GM12878 (cell line): ENCODE measurements at regions of chr11 and their contacts with region 1.

Region 1: DNA sequence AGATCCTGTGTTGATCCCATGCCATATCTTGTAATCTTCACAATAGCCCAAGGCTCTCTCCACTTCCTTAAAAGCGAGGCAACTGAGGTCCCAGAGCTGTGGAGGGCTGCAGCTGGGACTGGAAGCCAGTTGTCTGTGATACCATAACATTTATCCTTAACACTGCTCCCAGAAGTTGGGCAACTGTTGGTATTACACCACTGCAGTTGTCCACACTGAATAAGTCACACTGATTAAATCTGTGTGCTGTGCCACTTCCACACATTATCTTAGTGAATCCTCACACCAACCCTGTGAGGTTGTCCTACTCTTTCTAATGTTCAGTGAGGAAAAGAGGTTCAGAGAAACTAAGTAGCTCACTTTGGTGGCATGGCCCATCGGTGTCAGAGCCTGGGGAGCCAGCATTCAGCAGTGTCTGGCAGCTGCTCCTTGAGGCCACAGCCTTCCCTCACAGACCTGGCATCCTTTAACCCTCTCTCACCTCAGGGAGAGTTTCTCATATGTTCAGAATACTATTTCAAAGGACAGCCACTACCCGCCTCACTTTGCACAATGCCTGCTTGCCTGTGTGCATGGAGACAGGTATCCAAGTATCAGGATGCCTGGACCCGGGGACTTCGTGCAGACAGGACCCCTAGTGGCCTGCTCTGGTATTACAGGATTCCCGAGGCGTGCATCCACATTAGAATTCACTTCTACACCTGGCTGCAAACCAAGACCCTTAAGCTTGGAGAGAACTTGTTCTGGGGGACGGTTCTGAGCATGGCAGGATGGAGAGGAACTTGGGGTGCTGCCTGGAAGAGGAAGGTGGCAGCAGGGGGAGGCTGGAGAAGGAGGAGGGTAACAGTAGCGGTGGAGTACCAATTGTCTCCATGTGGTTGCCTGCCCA is 221.9 kb upstream of the TBCEL start:
- DNase-seq: no peak
- ATAC-seq: peak; percentile 80
- H3K4me3 ChIP-seq: no peak overlapping the region
- H3K27ac ChIP-seq: no peak overlapping the region
- H3K4me1 ChIP-seq: no peaks in the 10 kb centered on the region
- H3K27me3 ChIP-seq: no peaks in the 10 kb centered on the region
- CTCF ChIP-seq: peak; percentile 87 to 96 (median 91)
- EP300 ChIP-seq: no peak
- POLR2A ChIP-seq: no peak
- RAD21 ChIP-seq: peak; percentile 72

Region 2: GRCh38 chr11:120622189-120622875 is 179.7 kb before region 1 on chr11:
- CTCF ChIA-PET with region 1: interaction called, 15 read pairs
- POLR2A ChIA-PET with region 1: no interaction called
- RAD21 ChIA-PET with region 1: interaction called, 3 read pairs
- SMC1A ChIA-PET with region 1: interaction called, 4 read pairs
- in situ Hi-C with region 1: no loop called
- intact Hi-C with region 1: no loop called
- DNase-seq: no peak
- ATAC-seq: peak; percentile 89
- H3K4me3 ChIP-seq: no peak overlapping the region
- H3K27ac ChIP-seq: no peak overlapping the region; the same call in 1 of the 2 replicates
- H3K4me1 ChIP-seq: peaks cover 6% of the 10 kb centered on the region; the same call in 1 of the 2 replicates
- H3K27me3 ChIP-seq: no peaks in the 10 kb centered on the region
- CTCF ChIP-seq: peak; percentile 35 to 56 (median 54)
- EP300 ChIP-seq: no peak
- POLR2A ChIP-seq: no peak
- RAD21 ChIP-seq: peak; percentile 36

Region 3: DNA sequence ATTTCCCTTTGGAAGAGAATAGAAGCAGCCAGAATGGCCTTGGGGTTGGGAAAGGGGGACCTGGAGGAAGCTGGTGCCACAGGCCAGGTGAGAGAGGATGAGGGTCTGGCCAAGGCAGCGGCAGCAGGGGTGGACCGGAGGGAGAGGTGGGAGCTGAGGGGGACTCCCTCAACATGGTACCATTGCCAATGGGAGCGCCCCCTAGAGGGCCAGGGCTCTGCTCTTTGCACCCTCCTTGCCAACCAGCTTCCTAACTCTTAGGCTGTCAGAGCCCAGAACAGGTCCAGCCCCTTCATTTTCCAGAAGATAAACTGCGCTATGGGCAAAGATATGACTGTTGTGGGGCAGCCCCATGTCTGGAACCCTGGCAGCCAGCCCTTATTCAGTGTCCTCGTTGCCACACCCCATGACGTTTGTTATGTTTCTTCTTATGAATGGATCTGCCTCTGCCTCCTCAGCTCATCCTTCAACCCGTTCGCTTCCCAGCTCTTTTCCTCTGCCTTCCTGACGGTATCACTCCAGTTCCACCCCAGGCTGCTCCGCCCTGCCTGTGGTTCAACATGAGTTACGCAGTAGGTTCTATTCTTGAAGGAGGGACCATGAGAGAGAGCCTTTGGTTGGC is 105.3 kb before region 1 on chr11:
- CTCF ChIA-PET with region 1: interaction called, 25 read pairs
- POLR2A ChIA-PET with region 1: no interaction called
- RAD21 ChIA-PET with region 1: interaction called, 3 read pairs
- SMC1A ChIA-PET with region 1: no interaction called
- in situ Hi-C with region 1: no loop called
- intact Hi-C with region 1: no loop called
- DNase-seq: no peak
- ATAC-seq: peak; percentile 32; the same call in 1 of the 3 replicates
- H3K4me3 ChIP-seq: no peak overlapping the region
- H3K27ac ChIP-seq: no peak overlapping the region
- H3K4me1 ChIP-seq: peaks cover 1% of the 10 kb centered on the region; the same call in 1 of the 2 replicates
- H3K27me3 ChIP-seq: no peaks in the 10 kb centered on the region
- CTCF ChIP-seq: peak in 2 of 3 experiments; percentile 18 to 40; a peak in 3 of 6 replicates
- EP300 ChIP-seq: no peak
- POLR2A ChIP-seq: no peak
- RAD21 ChIP-seq: no peak

Region 4: DNA sequence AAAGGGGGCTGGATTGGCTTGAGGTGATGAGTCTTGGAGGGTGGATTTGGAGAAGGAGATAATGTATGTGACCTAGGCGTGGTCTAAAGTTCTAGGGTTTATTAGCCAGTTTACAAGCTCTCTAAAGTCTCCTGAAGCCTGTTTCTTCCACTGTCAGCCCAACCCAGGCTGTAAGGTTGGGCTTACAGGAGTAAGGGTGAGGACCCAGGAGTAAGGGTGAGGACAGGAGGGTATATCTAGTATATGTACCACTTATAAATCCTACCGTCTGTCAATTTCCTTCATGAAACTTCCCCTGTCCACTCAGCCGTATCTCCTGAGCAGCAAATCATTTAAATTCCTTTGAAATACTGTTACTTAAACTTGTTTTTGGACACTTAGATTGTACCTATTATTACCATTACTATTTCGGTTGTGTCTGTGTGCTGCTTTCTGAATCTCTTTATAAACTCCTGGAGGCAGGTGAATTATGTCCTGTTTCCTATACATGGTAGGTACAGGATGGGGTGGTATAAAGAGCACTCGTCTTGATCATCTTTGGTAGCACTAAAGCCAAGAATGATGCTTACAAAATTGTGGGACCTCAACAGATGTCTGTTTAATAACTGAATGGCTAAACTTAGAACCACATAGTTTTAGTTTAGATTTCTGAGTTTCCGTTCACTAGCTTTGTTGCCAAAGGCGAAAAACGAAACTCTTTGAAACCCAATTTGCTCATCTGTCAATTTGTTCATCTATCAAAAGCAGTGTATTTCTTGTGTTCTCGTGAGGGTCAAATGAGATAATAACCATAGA is 98.5 kb before region 1 on chr11:
- CTCF ChIA-PET with region 1: interaction called, 25 read pairs
- POLR2A ChIA-PET with region 1: interaction called, 3 read pairs
- RAD21 ChIA-PET with region 1: no interaction called
- SMC1A ChIA-PET with region 1: interaction called, 3 read pairs
- in situ Hi-C with region 1: no loop called
- intact Hi-C with region 1: no loop called
- DNase-seq: peak; percentile 77
- ATAC-seq: peak; percentile 85
- H3K4me3 ChIP-seq: peak overlapping the region; percentile 11; the same call in 1 of the 2 replicates
- H3K27ac ChIP-seq: peak overlapping the region; percentile 75
- H3K4me1 ChIP-seq: peaks cover 31% of the 10 kb centered on the region
- H3K27me3 ChIP-seq: no peaks in the 10 kb centered on the region
- CTCF ChIP-seq: no peak
- EP300 ChIP-seq: no peak; a peak in 1 of 4 replicates
- POLR2A ChIP-seq: no peak
- RAD21 ChIP-seq: no peak

Region 5: GRCh38 chr11:120929664-120930154 is 127.7 kb after region 1 on chr11:
- CTCF ChIA-PET with region 1: interaction called, 14 read pairs
- POLR2A ChIA-PET with region 1: no interaction called
- RAD21 ChIA-PET with region 1: interaction called, 3 read pairs
- SMC1A ChIA-PET with region 1: interaction called, 3 read pairs
- in situ Hi-C with region 1: no loop called
- intact Hi-C with region 1: loop called (anchors 10 kb)
- DNase-seq: no peak
- ATAC-seq: peak; percentile 83
- H3K4me3 ChIP-seq: no peak overlapping the region
- H3K27ac ChIP-seq: no peak overlapping the region
- H3K4me1 ChIP-seq: peaks cover 18% of the 10 kb centered on the region
- H3K27me3 ChIP-seq: no peaks in the 10 kb centered on the region
- CTCF ChIP-seq: peak; percentile 72 to 89 (median 81)
- EP300 ChIP-seq: no peak
- POLR2A ChIP-seq: no peak
- RAD21 ChIP-seq: peak; percentile 58

Region 6: DNA sequence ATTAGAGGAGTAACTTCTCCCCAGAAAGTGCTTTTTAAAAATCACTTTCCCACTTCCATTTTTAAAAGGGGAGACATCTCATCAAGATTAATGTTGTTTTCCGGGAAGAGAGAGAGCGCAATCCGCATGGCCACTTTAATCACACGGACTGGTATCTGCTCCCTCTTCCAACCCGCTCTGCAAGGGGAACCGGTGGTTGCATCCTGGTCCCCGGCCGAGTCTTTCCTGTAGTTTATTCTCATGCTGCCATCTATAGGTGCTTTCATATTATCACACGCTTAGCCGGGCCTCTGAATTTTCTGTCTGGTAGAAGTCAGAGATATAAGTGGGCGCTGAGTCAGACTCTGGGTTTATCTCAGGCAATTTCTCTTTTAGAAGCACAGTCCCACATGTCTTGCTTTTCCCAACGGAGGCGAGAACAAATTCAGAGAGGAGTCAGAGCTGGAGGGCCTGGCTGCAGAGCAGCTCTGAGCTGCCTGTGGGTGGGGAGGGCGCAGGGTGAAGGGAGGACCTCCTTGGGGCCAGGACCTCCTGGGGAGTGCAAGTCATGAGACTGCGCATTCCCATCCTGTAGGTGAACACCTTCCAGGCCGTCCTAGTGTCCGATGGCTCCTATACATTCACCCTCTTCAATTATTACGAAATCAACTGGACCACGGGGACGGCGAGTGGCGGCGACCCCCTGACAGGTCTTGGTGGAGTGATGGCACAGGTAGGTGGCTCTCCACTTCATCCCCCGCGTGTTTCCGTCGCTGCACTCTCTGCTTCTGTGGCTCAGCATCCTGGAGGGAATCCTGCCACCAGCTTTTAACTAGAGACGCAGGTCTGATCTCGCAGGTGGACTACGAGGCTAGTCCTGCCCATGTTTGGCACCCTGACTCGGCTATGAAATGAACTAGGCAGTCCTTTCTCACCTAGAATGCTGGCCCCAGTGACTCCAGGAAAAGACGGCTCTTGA is 310.7 kb after region 1 on chr11:
- CTCF ChIA-PET with region 1: no interaction called
- POLR2A ChIA-PET with region 1: no interaction called
- RAD21 ChIA-PET with region 1: no interaction called
- SMC1A ChIA-PET with region 1: no interaction called
- in situ Hi-C with region 1: no loop called
- intact Hi-C with region 1: loop called (anchors 10 kb)
- DNase-seq: no peak
- ATAC-seq: peak; percentile 95
- H3K4me3 ChIP-seq: no peak overlapping the region
- H3K27ac ChIP-seq: no peak overlapping the region
- H3K4me1 ChIP-seq: no peaks in the 10 kb centered on the region
- H3K27me3 ChIP-seq: peaks cover 0 to 12% of the 10 kb centered on the region in 2 experiments; a peak in 3 of 4 replicates
- CTCF ChIP-seq: peak; percentile 56 to 83 (median 66)
- EP300 ChIP-seq: no peak
- POLR2A ChIP-seq: no peak
- RAD21 ChIP-seq: peak; percentile 82